ENCODE measurements at regions of chr21 and their contacts with region 1.

Region 1: DNA sequence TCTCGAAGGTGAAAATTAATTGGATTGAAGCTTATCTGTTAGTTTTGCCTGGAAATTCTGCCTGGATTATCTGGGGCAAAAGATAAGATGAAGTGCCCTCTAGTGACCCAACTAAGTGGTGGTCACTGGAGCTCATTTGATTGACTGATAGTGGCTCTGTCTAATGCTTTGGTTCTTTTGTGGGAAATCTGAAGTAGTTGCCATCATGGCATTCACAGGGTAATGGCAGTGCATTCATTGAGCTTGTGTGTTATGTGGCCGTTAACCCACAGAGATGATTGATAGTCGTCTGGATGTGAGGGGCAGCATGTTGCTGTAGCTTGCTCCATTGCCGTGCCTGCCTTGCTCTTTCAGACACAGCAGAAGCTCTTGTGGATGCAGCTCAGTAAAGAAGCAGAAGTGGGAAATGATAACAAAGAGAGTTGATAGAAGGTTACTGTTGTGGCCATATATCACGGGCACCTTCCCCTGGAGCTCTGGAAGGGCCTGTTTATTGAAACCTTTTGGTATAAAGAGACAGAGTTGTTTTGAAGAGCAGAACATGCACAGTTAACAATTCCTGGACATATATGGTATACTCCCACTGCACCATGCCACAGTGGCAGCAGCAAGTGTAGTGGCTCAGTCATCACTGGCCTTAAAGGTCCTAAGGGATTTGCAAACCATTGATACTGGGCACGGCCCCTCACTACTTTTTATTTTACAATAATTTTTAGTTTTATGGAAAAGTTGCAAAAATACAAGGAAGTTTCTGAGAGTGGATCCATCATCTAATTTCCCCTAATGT is 42.0 kb downstream of the CXADR start:
- DNase-seq: peak; percentile 32
- ATAC-seq: peak; percentile 62
- H3K4me3 ChIP-seq: no peak overlapping the region
- H3K27ac ChIP-seq: no peak overlapping the region
- H3K4me1 ChIP-seq: peaks cover 20% of the 10 kb centered on the region
- H3K27me3 ChIP-seq: no peaks in the 10 kb centered on the region
- CTCF ChIP-seq: peak; percentile 64
- EP300 ChIP-seq: no peak
- POLR2A ChIP-seq: no peak
- RAD21 ChIP-seq: peak; percentile 59

Region 2: GRCh38 chr21:17393413-17393812 is 161.5 kb before region 1 on chr21:
- CTCF ChIA-PET with region 1: interaction called, 17 read pairs
- POLR2A ChIA-PET with region 1: no interaction called
- in situ Hi-C with region 1: loop called (anchors 10 kb)
- intact Hi-C with region 1: no loop called
- DNase-seq: no peak
- ATAC-seq: no peak
- H3K4me3 ChIP-seq: no peak overlapping the region
- H3K27ac ChIP-seq: no peak overlapping the region
- H3K4me1 ChIP-seq: 0 out of 2 replicates have a peak, but pooled peaks cover 15% of the 10 kb centered on the region
- H3K27me3 ChIP-seq: no peaks in the 10 kb centered on the region
- CTCF ChIP-seq: no peak
- EP300 ChIP-seq: no peak
- POLR2A ChIP-seq: no peak
- RAD21 ChIP-seq: no peak

Region 3: DNA sequence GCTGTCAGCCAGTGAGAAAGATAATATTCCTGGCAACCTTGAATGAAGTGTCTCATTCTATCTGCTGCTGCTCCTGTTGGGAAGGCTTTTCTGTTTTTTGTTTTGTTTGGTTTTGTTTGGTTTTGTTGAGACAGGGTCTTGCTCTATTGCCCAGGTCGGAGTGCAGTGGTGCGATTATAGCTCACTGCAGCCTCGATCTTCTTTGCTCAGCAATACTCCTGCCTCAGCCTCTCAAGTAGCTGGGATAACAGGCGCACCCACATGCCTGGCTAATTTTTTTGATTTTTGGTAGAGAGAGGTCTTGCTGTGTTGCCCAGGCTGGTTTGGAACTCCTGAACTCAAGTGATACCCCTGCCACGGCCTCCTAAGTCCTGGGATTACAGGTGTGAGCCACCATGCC is 20.2 kb after region 1 on chr21:
- CTCF ChIA-PET with region 1: no interaction called
- POLR2A ChIA-PET with region 1: no interaction called
- in situ Hi-C with region 1: no loop called
- intact Hi-C with region 1: no loop called
- DNase-seq: no peak
- ATAC-seq: no peak
- H3K4me3 ChIP-seq: no peak overlapping the region
- H3K27ac ChIP-seq: no peak overlapping the region
- H3K4me1 ChIP-seq: peaks cover 4% of the 10 kb centered on the region
- H3K27me3 ChIP-seq: no peaks in the 10 kb centered on the region
- CTCF ChIP-seq: no peak
- EP300 ChIP-seq: no peak
- POLR2A ChIP-seq: no peak
- RAD21 ChIP-seq: no peak

Region 4: DNA sequence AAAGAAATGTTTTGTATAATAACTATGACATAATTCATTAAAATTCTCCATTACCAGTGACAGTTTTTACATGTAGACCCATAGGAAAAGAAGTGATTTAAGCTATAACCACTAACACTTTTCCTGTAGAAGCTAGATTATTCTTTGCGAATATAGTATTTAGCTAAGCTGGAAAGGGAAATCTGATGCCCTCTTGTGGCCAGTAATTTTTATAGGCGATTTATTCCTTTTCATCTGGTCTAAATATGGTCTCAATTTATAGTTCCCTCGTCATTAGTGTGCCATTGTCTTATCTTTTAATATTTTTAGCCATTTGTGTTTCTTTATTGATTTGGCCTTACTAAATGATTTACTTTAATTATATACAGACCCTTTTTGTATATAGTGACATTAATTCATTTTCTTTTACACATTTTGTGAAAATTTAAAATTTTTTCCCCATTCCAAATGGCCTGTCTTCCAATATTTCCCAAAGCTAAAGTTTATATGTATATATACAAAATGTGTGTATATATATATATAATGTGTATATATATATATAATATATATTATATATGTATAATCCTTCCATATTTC is 31.1 kb after region 1 on chr21:
- CTCF ChIA-PET with region 1: no interaction called
- POLR2A ChIA-PET with region 1: no interaction called
- in situ Hi-C with region 1: no loop called
- intact Hi-C with region 1: loop called (anchors 2 kb)
- DNase-seq: peak; percentile 41
- ATAC-seq: peak; percentile 58; the same call in 2 of the 3 replicates
- H3K4me3 ChIP-seq: no peak overlapping the region
- H3K27ac ChIP-seq: no peak overlapping the region
- H3K4me1 ChIP-seq: no peaks in the 10 kb centered on the region
- H3K27me3 ChIP-seq: no peaks in the 10 kb centered on the region
- CTCF ChIP-seq: peak; percentile 43
- EP300 ChIP-seq: no peak
- POLR2A ChIP-seq: no peak
- RAD21 ChIP-seq: no peak

Region 5: GRCh38 chr21:17793246-17794123 is 238.6 kb after region 1 on chr21:
- CTCF ChIA-PET with region 1: no interaction called
- POLR2A ChIA-PET with region 1: no interaction called
- in situ Hi-C with region 1: no loop called
- intact Hi-C with region 1: no loop called
- DNase-seq: no peak
- ATAC-seq: no peak
- H3K4me3 ChIP-seq: no peak overlapping the region
- H3K27ac ChIP-seq: no peak overlapping the region
- H3K4me1 ChIP-seq: peaks cover 19% of the 10 kb centered on the region
- H3K27me3 ChIP-seq: no peaks in the 10 kb centered on the region
- CTCF ChIP-seq: no peak
- EP300 ChIP-seq: no peak
- POLR2A ChIP-seq: no peak
- RAD21 ChIP-seq: no peak